ENCODE measurements at regions of chr7 and their contacts with region 1.

Region 1: DNA sequence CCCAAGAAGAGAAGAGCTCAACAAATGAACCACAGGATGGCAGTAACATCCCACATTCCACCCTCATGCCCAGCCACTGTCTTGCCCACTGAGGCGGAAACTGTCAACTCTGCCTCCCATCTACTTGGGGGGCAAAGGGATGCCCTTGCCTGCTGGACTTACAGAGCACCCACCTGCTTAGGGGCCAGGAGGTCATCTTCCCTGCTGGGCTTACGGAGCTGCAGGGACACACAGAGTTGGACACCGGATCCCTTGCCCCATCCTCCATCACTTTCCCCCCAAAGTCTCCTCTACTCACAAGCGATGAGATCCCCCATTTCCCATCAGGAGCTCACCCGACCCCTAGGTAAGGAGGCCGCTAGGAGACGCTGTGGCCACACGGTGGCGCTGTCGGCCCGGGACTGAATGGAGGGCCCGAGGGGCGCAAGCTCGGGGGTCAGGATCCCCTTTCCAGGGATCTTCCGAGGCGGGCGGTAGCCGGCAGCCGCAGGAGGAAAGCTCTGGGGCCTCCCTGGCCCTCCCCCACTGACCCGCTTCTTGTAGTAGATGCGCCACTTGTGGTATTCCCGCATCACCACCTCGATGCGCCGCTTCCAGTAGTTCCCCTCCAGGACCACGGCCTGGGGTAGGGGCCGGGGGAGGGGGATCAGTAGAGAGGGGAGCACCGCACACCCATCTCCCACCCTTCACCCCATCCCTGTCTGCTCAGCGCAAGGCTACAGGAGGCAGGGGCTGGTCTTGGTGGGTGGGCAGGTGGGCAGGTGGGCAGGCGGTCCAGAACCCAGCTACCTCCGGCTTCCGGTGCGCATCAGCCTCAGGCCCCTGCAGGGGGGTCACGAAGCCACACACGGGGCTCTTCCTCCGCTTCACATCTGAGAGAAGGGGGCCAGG is 17.3 kb downstream of the MLXIPL start:
- DNase-seq: peak; percentile 74
- ATAC-seq: peak; percentile 82

Region 2: DNA sequence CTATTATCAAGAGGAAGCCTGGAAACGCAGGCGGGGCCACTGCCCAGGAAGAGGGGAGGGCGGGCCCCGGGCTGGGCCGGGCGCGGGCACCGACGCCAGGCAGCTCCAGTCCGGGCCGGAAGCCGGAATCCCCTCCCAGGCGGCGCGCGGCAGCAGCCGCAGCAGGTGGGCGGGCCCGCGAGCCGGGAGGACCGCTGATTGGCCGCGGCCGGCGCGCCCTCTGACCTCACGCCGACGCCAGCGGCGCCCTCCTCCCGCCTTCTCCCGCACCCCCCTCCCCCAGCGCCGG is 50.0 kb before region 1 on chr7:
- intact Hi-C with region 1: no loop called
- DNase-seq: peak; percentile 97
- ATAC-seq: peak; percentile 96

Region 3: DNA sequence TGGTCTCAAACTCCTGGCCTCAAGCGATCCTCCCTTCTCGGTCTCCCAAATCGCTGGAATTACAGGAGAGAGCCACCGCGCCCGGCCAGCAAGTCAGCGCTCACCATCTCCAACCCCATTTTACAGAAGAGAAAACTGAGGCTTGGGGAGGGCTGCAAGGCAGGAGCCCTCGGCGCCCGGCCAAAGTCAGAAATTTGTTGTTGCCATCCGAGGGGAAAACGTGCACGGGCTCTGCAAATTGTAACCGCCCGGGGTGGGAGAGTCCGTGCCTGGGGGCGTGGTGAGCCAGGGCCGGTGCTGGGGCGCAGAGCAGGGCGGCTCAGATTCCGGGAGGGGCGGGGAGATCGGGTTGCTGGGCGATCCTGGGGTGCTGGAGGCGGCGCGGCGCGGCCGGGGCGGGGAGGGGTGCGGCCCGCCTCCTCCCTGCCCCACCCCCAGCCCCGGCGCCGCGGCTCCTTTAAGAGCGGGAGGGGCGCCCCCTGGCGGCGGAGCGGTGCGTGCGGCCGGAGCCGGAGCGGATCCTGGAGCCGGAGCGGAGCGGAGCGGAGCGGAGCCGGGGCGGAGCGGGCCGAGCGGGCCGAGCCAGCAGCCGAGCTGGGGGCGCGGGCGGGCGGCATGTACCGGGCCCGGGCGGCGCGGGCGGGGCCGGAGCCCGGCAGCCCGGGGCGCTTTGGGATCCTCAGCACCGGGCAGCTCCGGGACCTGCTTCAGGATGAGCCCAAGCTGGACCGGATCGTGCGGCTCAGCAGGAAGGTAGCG is 60.5 kb after region 1 on chr7 and contains the start of gene VPS37D:
- intact Hi-C with region 1: loop called (anchors 10 kb)
- DNase-seq: peak; percentile 97
- ATAC-seq: peak; percentile 97
- total RNA-seq, gene VPS37D: 3.3 TPM